ENCODE measurements at regions of chr18 and their contacts with region 1.

Region 1: GRCh38 chr18:59837586-59837985 is 62.2 kb upstream of the PMAIP1 start:
- DNase-seq: peak; percentile 69
- CTCF ChIP-seq: peak; percentile 86

Region 2: DNA sequence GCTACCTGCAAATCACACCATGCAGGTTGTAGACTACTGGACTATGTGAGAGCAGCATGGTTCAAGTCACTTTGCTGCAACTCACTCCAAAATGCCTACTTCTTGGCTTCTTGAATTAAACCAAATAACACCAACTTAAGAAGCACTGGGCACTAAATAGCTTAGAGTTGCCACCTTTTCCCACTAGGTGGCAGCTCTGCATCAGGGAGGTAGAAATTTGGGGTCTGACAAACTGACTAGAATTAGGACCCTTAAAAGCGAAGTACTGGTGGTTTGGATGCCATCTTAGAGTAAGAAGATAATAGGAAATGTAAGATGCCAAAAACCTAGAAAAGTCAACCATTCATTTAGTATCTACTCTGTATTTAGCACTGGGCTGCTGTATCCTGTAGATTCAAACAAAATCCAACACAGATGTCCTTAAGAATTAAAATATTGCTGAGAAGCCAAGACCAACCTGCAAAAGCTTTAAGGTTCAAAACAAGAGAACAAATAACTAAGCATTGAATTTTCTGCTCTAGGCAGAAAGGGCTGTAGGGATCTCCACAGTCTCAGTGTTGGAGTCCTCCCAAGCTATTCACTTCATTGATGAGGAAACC is 205.9 kb before region 1 on chr18:
- in situ Hi-C with region 1: no loop called
- DNase-seq: peak; percentile 25
- CTCF ChIP-seq: peak; percentile 70

Region 3: DNA sequence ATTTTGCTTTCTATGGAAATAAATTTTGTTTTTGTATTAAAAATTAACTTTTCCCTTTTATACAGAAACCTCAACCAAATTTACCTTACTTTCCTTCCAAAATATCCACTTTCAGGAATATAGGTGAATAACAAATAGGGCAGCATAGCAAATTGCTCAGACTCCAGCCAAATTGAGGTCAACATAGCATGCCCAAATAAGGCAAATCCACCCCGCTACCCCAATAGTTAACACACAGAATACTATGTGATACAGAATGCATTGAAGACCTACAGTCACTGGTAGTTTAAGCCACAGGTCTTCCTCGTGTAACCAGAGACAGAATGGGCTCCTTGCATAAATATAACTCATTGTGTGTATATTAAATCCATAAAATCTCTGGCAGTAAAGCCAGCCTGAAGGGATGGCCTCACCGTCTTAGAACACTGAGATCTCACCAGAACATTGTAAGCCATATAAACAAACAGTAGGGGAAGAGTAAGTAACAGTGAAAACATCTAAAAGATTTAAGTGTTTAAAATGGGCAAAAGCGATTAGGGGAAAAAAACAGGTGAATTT is 134.4 kb after region 1 on chr18:
- in situ Hi-C with region 1: loop called (anchors 10 kb)
- DNase-seq: no peak
- CTCF ChIP-seq: no peak